BJ (cell line): ENCODE measurements at regions of chr21 and their contacts with region 1.

Region 1: DNA sequence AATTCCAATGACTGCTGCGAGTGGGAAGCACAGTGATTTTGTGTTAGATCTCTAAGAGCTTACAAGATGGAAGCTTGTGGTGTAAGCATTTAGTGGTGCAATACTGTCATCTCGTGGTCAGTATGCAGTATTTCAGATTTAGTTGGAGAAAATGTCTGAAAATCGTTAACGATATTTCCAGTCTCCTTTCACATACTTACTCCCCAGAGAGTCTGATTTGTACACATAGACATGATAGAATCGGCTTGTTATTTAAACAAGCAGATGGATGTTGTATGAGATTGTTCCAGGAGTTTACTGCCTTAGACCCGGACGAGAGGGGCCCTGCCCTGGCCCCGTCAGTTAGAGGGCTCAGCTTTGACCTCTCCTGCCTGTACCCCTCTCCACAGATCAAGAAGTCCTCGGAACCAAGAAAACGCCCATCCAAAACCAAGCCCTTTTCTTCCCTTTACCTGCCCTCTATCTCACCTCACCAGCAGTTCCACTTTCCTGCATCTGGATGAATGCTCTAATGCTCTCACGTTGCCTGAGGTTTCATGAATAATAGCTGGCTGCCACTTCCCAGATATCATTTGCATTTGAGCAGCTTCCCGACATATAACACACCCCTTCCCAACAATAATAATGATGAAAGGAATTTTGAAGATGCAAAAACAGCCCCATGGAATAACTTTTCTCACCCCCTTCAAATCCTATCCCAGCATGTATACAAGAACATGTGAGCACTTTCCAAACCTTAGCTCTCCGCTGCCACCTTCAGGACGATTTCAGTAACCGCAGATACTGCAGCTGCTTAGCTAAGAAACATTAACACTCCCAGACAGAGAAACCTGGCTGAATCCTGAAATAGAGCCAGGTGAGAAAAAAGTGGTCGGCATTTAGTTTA is 247.3 kb downstream of the LTN1 start:
- DNase-seq: peak; percentile 45
- H3K4me3 ChIP-seq: peak overlapping the region; percentile 24
- H3K27me3 ChIP-seq: no peaks in the 10 kb centered on the region
- CTCF ChIP-seq: peak; percentile 83

Region 2: DNA sequence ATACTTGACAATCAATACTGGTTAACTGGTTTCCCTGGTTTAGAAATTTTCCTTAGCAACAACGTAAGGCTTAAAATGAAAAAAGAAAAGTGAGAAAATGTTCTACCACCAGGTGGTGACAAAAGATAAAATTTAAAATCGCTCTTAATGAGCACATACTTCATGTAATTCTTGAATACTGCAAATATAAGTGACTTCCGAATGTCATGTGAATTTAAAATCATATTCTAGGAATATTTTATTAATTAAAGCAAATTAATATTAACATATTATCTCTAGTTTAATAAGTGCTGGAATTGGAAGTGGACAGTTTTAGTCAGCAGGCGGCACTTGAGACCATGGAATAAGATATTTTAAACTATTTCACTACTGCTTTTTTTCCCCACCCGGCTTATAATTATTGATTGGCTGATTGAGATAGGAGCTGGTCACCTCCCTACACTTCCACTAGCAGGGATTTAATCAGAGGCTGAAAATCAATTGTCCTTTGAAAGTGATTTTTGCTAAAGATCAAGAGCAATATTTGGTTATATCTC is 1895.2 kb before region 1 on chr21:
- CTCF ChIA-PET with region 1: interaction called, 30 read pairs
- POLR2A ChIA-PET with region 1: no interaction called
- DNase-seq: no peak
- H3K4me3 ChIP-seq: no peak overlapping the region
- H3K27me3 ChIP-seq: no peaks in the 10 kb centered on the region
- CTCF ChIP-seq: peak; percentile 51

Region 3: GRCh38 chr21:27700974-27701614 is 1044.3 kb before region 1 on chr21:
- CTCF ChIA-PET with region 1: interaction called, 32 read pairs
- POLR2A ChIA-PET with region 1: no interaction called
- DNase-seq: no peak
- H3K4me3 ChIP-seq: no peak overlapping the region
- H3K27me3 ChIP-seq: no peaks in the 10 kb centered on the region
- CTCF ChIP-seq: peak; percentile 83

Region 4: DNA sequence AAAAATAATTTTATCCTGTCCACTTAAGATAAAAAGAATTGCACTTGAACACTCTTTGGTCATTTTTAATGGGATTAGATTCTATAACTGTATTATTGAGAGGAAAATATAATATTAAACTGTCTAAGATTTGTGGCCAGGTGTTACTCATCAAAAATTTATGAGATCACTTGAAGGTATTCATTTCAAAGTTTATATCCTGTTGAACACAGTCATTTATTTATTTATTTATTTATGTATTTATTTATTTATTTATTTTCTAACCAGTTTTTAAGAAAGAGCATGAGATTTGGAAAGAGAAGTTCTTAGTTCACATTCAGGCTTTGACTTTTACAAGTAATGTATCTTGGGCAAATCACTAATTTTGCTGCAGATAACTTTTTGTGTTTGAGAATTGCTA is 445.4 kb before region 1 on chr21:
- CTCF ChIA-PET with region 1: no interaction called
- POLR2A ChIA-PET with region 1: no interaction called
- DNase-seq: no peak
- H3K4me3 ChIP-seq: no peak overlapping the region
- H3K27me3 ChIP-seq: no peaks in the 10 kb centered on the region
- CTCF ChIP-seq: no peak

Region 5: DNA sequence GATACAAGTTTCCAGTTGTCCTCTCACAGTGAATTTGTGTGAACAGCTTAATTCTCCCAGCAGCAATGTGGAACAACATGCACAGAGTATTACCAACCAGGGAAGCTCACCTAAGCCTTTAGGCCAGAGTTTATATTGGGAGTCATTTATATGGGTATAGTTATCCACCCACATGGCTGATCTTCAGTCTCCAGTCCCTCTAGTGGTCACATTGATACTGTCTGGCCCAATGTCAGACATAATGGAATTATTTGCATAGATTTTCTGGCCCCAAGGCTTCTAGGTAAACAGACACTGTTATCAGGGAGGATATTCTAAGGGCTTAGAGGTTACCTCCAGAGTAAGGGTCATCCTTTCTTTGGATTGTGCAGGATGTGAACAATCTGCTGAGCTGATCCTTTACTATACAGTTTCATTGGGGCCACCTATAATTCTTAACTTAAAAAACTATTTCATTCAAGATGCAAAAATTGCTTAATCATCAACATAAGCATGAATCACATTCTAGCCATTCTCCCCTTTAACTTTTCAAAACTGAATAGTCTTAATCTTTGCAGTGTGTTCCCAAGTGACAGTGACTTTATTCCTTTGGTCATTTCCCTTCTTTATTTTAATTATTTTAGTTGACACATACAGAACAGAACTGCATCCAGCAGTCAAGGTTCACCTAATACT is 36.4 kb after region 1 on chr21:
- CTCF ChIA-PET with region 1: interaction called, 11 read pairs
- POLR2A ChIA-PET with region 1: no interaction called
- DNase-seq: no peak
- H3K4me3 ChIP-seq: no peak overlapping the region
- H3K27me3 ChIP-seq: no peaks in the 10 kb centered on the region
- CTCF ChIP-seq: peak; percentile 56

Region 6: DNA sequence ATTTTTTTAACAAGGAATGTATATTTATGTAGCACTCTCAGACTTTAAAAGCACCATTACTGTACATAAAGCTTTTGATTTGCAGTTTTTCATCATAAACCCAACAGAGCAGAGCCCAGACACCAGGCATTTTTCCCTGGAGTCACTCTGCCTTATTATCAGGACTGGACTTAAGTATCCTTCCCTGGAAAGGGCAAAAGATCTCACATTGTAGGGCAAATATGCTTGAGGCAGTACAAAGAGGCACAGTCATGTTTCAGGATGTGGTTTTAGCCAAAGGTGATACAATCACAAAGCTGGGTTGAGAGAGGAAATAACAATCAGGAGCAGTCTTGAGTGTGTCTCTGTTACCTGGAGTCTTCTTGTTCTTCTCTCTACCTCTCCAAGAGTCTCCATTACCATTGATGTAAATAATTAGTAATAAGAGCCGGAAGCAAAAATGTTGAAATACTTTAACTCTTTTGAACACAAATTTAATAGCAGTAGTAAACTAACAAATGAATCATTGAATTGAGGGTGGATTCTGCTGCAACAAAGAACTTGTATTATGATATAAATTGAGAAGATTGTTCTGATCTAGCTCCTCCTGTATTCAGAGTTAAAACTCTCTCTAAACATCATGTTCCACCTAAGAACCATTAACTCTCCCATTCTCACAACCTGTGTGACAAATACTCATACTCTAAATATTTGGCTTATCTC is 86.8 kb after region 1 on chr21:
- CTCF ChIA-PET with region 1: no interaction called
- POLR2A ChIA-PET with region 1: no interaction called
- DNase-seq: no peak
- H3K4me3 ChIP-seq: no peak overlapping the region
- H3K27me3 ChIP-seq: no peaks in the 10 kb centered on the region
- CTCF ChIP-seq: no peak

Region 7: GRCh38 chr21:28938726-28939125 is 193.4 kb after region 1 on chr21:
- CTCF ChIA-PET with region 1: interaction called, 37 read pairs
- POLR2A ChIA-PET with region 1: interaction called, 3 read pairs
- DNase-seq: no peak
- H3K4me3 ChIP-seq: no peak overlapping the region
- H3K27me3 ChIP-seq: no peaks in the 10 kb centered on the region
- CTCF ChIP-seq: no peak